HepG2 (cell line): ENCODE measurements at regions of chr12 and their contacts with region 1.

Region 1: GRCh38 chr12:50314629-50315312 is 31.5 kb upstream of the LIMA1 start:
- DNase-seq: peak; percentile 46
- ATAC-seq: no peak
- H3K4me3 ChIP-seq: no peak overlapping the region
- H3K27ac ChIP-seq: no peak overlapping the region
- H3K4me1 ChIP-seq: 0 out of 2 replicates have a peak, but pooled peaks cover 7% of the 10 kb centered on the region
- H3K27me3 ChIP-seq: no peaks in the 10 kb centered on the region; a peak in 1 of 5 replicates
- CTCF ChIP-seq: peak; percentile 77
- EP300 ChIP-seq: no peak
- POLR2A ChIP-seq: no peak
- RAD21 ChIP-seq: peak; percentile 85

Region 2: GRCh38 chr12:50132505-50133135 is 182.2 kb before region 1 on chr12:
- CTCF ChIA-PET with region 1: interaction called, 14 read pairs
- POLR2A ChIA-PET with region 1: no interaction called
- in situ Hi-C with region 1: no loop called
- intact Hi-C with region 1: loop called (anchors 5 kb)
- DNase-seq: peak; percentile 48
- ATAC-seq: peak; percentile 74
- H3K4me3 ChIP-seq: no peak overlapping the region
- H3K27ac ChIP-seq: no peak overlapping the region
- H3K4me1 ChIP-seq: no peaks in the 10 kb centered on the region
- H3K27me3 ChIP-seq: no peaks in the 10 kb centered on the region
- CTCF ChIP-seq: peak; percentile 72
- EP300 ChIP-seq: no peak
- POLR2A ChIP-seq: no peak
- RAD21 ChIP-seq: peak; percentile 44; the same call in 1 of the 2 replicates

Region 3: DNA sequence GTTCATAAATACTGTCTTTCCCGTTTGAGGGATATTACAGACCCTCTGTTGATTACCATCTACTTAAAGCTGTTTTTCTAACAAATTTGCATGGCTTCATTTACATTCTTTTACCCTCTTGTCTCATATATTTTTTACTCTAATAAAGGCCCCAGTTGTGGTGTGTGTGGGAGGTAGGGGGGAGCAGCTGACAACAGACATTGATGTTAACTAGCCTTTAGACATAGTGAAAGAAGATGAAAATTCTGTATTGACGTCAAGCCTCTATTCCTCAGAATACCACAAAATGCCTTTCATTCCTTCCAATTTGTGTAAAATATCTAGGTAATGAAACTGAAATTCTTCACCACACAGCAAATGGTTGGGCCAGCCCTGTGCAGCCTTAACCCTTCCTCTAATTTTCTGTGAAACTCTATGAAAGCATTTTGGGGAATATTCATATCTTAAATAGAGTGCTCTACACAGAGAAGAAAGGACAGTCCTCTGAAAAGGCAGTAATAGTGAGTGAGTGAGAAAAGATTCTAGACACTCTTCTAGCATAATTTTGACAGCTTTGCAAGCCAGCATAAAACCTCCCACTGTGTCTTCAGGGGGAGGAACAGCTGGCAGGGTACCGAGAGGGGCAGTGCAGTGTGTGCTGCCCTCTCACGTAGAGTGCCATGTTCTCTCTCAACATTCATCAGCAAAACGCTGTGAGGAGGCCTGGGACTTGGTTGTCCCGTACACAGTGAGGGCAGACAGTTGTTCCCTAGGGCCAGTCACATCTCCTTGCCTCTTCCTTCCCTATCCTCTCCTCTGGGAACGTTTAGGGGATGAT is 127.5 kb before region 1 on chr12:
- CTCF ChIA-PET with region 1: interaction called, 3 read pairs
- POLR2A ChIA-PET with region 1: no interaction called
- in situ Hi-C with region 1: loop called (anchors 10 kb)
- intact Hi-C with region 1: loop called (anchors 2 kb)
- DNase-seq: no peak
- ATAC-seq: no peak
- H3K4me3 ChIP-seq: no peak overlapping the region
- H3K27ac ChIP-seq: peak overlapping the region; percentile 51
- H3K4me1 ChIP-seq: peaks cover 40% of the 10 kb centered on the region
- H3K27me3 ChIP-seq: no peaks in the 10 kb centered on the region
- CTCF ChIP-seq: no peak
- EP300 ChIP-seq: no peak
- POLR2A ChIP-seq: no peak
- RAD21 ChIP-seq: no peak